Activated naive CD4-positive, alpha-beta T cell treated with anti-CD3 and anti-CD28 coated beads for 36 hours (primary cell): ENCODE measurements at regions of chr2 and their contacts with region 1.

Region 1: DNA sequence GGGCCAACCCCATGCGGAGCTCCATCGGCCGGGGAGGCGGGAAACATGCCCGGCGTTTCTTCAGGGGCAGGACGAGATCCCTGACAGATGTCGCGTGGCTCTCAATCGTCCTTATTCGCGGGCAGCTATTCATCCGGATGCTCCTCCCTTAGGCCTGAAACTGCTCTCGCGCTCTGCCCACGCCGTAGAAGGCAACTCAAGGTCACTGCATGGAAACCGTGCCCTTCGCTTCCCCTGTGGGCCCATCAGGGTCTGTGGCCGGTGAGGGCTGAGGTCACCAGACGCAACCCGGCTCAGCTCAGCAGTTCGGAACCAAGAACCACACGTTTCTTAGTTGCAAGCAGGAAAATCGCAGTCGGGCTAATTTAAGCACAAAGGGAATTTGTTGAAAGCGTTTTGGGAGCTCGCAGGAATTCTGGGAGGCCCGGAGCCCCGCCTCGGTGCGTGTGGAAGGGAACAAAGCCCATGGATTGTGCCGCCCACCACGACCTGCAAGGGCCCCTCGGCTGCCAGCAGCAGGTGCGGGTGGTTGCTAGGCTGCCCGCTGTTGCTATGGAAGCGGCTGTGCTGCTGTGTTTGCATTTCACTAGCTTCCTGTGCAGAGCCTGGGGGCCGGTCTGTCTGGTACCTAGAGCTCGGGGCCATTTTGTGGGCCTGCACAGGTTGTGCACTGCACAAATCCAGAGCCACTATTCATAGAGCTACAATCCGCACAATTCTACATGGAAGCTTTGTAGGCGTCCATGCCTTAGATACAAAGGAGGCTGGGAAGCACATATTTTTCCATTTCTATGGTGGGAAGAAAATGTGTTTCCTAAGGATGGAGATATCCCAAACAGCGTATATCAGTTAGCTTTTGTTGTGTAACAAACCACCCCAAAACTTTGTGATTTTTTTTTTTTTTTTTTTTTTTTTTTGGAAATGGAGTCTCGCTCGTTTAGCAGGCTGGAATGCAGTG is 6.0 kb upstream of the ALLC start:
- DNase-seq: peak; percentile 76
- H3K4me3 Mint-ChIP-seq: peak overlapping the region; percentile 70
- H3K27ac Mint-ChIP-seq: peak overlapping the region; percentile 57
- H3K4me1 Mint-ChIP-seq: peaks cover 13% of the 10 kb centered on the region
- H3K27me3 Mint-ChIP-seq: no peaks in the 10 kb centered on the region

Region 2: GRCh38 chr2:3179208-3179607 is 472.8 kb before region 1 on chr2:
- CTCF ChIA-PET with region 1: no interaction called
- intact Hi-C with region 1: loop called (anchors 10 kb)
- DNase-seq: peak; percentile 60
- H3K4me3 Mint-ChIP-seq: no peak overlapping the region
- H3K27ac Mint-ChIP-seq: no peak overlapping the region
- H3K4me1 Mint-ChIP-seq: no peaks in the 10 kb centered on the region
- H3K27me3 Mint-ChIP-seq: no peaks in the 10 kb centered on the region

Region 3: DNA sequence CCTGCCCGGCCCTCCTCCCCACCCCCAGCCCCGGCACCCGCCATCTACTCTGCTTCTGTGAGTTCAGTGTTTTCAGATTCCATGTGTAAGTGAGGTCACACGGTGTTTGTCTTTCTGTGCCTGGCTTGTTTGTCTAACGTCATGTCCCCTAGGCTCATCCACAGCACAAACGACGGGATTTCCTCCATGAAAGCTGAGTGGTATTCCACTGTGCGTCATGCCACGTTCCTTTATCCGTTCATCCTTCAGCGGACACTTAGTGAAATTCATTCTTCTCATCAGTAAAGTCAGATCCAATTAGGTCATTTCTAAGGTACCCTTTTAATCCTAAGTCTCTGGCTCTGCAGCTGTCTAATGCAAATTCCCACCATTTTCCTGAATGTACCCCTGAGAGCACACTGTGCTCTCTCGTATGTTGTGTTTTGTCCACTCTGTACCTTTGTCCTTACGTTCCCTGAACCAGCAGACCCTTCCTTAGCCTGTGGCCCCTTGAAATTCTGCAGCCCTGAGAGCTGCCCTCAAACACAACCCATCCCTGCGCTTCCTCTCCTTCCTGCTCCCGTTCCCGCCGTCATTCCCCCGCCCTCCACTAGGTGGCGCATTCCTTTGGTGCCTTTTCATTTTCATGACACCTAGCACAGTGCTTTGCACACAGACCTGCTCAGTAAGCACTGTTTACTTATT is 228.3 kb before region 1 on chr2:
- CTCF ChIA-PET with region 1: interaction called, 41 read pairs
- intact Hi-C with region 1: loop called (anchors 1 kb)
- DNase-seq: peak; percentile 86
- H3K4me3 Mint-ChIP-seq: no peak overlapping the region
- H3K27ac Mint-ChIP-seq: no peak overlapping the region
- H3K4me1 Mint-ChIP-seq: no peaks in the 10 kb centered on the region
- H3K27me3 Mint-ChIP-seq: no peaks in the 10 kb centered on the region

Region 4: GRCh38 chr2:3518496-3519254 is 133.3 kb before region 1 on chr2:
- CTCF ChIA-PET with region 1: interaction called, 8 read pairs
- intact Hi-C with region 1: loop called (anchors 1 kb)
- DNase-seq: peak; percentile 96
- H3K4me3 Mint-ChIP-seq: peak overlapping the region; percentile 84
- H3K27ac Mint-ChIP-seq: peak overlapping the region; percentile 85
- H3K4me1 Mint-ChIP-seq: peaks cover 27% of the 10 kb centered on the region
- H3K27me3 Mint-ChIP-seq: no peaks in the 10 kb centered on the region

Region 5: DNA sequence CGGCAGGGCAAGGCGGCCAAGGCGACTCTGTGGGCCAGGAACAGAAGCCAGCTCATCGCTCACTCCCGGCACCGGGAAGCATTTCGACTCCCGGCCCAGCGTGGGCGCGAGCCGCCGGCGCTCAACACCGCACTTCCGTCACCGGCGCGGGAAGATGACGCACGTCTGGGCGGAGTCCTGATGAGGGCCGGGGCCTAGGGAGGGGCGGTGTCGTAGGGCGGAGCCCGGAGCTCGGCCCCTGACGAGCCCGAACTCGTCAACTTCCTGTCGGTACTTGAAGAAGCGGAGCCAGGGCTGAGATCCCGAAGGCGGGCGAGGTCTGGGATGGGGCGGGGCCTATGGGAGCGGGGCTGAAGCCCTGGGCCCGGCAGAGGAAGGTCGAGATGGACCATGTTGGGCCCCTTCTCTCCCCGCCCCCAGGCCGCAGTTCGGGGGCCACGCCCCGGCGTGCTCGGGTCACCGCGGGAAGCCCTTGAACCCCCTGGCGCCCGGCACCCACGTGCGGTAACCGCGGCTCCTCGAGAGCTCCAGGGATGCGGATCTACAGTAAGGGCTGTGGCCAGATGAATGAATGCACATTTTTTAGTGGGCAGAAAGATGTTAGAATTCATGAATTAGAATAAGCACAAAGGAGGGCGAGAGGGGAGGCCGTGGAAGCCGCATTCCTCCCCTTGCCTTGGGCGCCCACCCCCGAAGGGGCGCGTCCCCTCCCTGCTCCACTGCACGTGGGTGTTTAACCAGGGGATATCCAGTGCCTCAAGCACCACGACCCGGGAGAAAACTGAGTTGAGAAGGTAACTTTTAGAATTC is 93.6 kb before region 1 on chr2 and contains the start of gene RNASEH1:
- CTCF ChIA-PET with region 1: interaction called, 8 read pairs
- intact Hi-C with region 1: loop called (anchors 1 kb)
- DNase-seq: peak; percentile 99
- H3K4me3 Mint-ChIP-seq: peak within 1 kb of the TSS; percentile 84
- H3K27ac Mint-ChIP-seq: peak within 1 kb of the TSS; percentile 90
- H3K4me1 Mint-ChIP-seq: peaks cover 36% of the 10 kb centered on the region
- H3K27me3 Mint-ChIP-seq: no peaks in the 10 kb centered on the region
- total RNA-seq, gene RNASEH1: 23.0 to 24.0 TPM

Region 6: DNA sequence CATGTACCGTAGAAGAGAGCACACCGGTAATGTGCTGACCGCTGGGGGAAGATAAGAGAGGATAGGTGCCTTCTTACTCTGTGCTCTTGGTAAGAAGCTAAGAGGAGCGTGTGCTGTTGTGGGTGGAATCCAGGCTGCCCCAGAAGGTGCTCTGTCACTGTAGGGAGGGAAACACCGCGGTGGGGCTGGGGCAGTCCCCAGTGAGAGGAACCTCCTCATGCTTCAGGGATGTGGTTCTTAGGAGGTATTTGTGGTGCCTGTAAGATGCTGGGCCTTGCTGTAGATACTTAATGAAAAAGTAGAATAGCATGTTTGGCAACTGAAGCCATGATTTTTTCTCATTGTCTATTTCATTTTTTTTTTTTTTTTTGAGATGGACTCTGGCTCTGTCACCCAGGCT is 56.0 kb before region 1 on chr2:
- CTCF ChIA-PET with region 1: no interaction called
- intact Hi-C with region 1: loop called (anchors 2 kb)
- DNase-seq: peak; percentile 83
- H3K4me3 Mint-ChIP-seq: no peak overlapping the region
- H3K27ac Mint-ChIP-seq: peak overlapping the region; percentile 24
- H3K4me1 Mint-ChIP-seq: peaks cover 29% of the 10 kb centered on the region
- H3K27me3 Mint-ChIP-seq: peaks cover 9% of the 10 kb centered on the region

Region 7: GRCh38 chr2:3827673-3828575 is 176.0 kb after region 1 on chr2:
- CTCF ChIA-PET with region 1: no interaction called
- intact Hi-C with region 1: no loop called
- DNase-seq: peak; percentile 34
- H3K4me3 Mint-ChIP-seq: no peak overlapping the region
- H3K27ac Mint-ChIP-seq: no peak overlapping the region
- H3K4me1 Mint-ChIP-seq: no peaks in the 10 kb centered on the region
- H3K27me3 Mint-ChIP-seq: peaks cover 4% of the 10 kb centered on the region

Region 8: DNA sequence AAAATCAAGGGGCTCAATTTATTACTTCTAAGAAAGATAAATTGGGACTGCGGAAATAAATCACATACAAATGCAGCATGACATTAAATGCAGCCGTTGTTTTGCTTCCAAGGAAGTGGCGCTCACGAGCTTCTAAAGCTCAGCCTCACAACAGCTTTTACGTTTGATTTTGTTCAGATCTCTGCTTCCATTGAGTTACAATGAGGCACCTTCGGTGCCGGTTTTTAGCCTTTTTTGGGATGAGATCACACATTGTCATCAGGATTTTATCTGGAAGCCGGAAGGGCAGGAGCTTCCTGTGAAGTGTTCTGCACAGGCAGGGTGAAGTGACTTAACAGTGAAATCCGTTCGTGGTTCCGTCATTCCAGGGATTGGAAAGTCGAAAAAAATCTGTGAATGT is 261.2 kb after region 1 on chr2:
- CTCF ChIA-PET with region 1: no interaction called
- intact Hi-C with region 1: no loop called
- DNase-seq: no peak
- H3K4me3 Mint-ChIP-seq: no peak overlapping the region
- H3K27ac Mint-ChIP-seq: no peak overlapping the region
- H3K4me1 Mint-ChIP-seq: no peaks in the 10 kb centered on the region
- H3K27me3 Mint-ChIP-seq: no peaks in the 10 kb centered on the region

Region 9: GRCh38 chr2:4662161-4662779 is 1010.3 kb after region 1 on chr2:
- CTCF ChIA-PET with region 1: no interaction called
- intact Hi-C with region 1: no loop called
- DNase-seq: no peak
- H3K4me3 Mint-ChIP-seq: no peak overlapping the region
- H3K27ac Mint-ChIP-seq: no peak overlapping the region
- H3K4me1 Mint-ChIP-seq: no peaks in the 10 kb centered on the region
- H3K27me3 Mint-ChIP-seq: no peaks in the 10 kb centered on the region